T-cell (primary cell): ENCODE measurements at regions of chr6 and their contacts with region 1.

Region 1: DNA sequence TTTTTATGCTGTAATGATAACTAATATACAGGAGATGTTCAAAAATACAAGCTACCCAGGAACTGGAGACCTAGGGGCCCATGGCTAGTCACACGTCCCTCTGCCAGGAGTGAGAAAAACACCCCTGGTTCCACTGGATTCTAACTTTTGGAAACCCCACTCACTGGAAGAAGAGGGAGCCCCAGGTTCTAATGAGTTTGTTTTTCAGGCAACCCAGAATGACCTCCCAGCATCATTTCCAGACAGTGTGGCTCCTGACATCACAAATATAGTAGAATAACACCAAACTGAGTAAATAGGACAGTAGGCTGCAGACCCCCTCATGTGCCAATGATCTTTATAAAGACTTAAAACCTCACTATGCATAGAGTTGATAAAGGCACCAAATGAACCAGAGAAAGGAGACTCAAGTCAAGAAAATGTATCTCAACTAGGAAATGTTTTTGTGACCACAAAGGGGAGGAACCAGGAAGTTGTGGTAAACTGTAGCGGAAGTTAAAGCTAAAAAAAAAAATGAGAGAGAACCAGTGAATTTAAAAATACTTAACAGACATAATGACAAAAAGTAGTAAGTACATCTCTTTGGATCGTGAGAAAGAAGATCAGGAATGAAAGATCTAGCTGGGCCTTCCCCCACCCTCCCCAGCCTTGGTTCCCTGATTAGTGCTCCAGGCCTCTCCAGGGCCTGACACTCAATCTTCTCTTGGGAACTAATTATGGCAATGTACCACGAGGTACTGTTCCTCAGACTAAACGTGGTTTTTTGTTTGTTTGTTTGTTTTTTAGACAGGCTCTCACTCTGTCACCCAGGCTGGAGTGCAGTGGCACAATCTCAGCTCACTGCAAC is 19.8 kb downstream of the HLA-E start:
- DNase-seq: peak in 5 of 35 experiments; percentile 31 to 84 (median 45)
- ATAC-seq: peak; percentile 80 to 87 (median 85)
- H3K4me3 ChIP-seq: peak overlapping the region; percentile 13 to 27
- H3K4me3 Mint-ChIP-seq: peak overlapping the region; percentile 10 to 73 (median 43)
- H3K27ac ChIP-seq: peak overlapping the region; percentile 65
- H3K27ac Mint-ChIP-seq: peak overlapping the region; percentile 80 to 86
- H3K4me1 ChIP-seq: peaks cover 60 to 83% of the 10 kb centered on the region in 2 experiments
- H3K4me1 Mint-ChIP-seq: peaks cover 53 to 68% (median 59%) of the 10 kb centered on the region in 3 donors
- H3K27me3 ChIP-seq: no peaks in the 10 kb centered on the region
- H3K27me3 Mint-ChIP-seq: no peaks in the 10 kb centered on the region

Region 2: GRCh38 chr6:30489081-30490025 is 19.8 kb before region 1 on chr6 and contains the start of gene HLA-E:
- CTCF ChIA-PET with region 1: interaction called, 3 to 12 read pairs
- POLR2A ChIA-PET with region 1: interaction called, 4 to 7 read pairs
- DNase-seq: peak; percentile 69 to 99 (median 90)
- ATAC-seq: peak; percentile 78 to 84 (median 84)
- H3K4me3 ChIP-seq: peak within 1 kb of the TSS; percentile 82 to 93
- H3K4me3 Mint-ChIP-seq: peak within 1 kb of the TSS; percentile 98 to 99 (median 99)
- H3K27ac ChIP-seq: peak within 1 kb of the TSS; percentile 89
- H3K27ac Mint-ChIP-seq: peak within 1 kb of the TSS; percentile 98 to 99
- H3K4me1 ChIP-seq: peaks cover 34 to 54% of the 10 kb centered on the region in 2 experiments
- H3K4me1 Mint-ChIP-seq: peaks cover 40 to 59% (median 56%) of the 10 kb centered on the region in 3 donors
- H3K27me3 ChIP-seq: peaks cover 0 to 3% of the 10 kb centered on the region in 2 experiments
- H3K27me3 Mint-ChIP-seq: no peaks in the 10 kb centered on the region
- total RNA-seq, gene HLA-E: 1,114 to 1,417 (median 1,253) TPM

Region 3: GRCh38 chr6:30600451-30600961 is 91.4 kb after region 1 on chr6:
- CTCF ChIA-PET with region 1: interaction called in 1 of 2 experiments, 3 read pairs
- POLR2A ChIA-PET with region 1: interaction called in 1 of 2 experiments, 18 read pairs
- DNase-seq: no peak
- ATAC-seq: no peak
- H3K4me3 ChIP-seq: no peak overlapping the region
- H3K4me3 Mint-ChIP-seq: no peak overlapping the region
- H3K27ac ChIP-seq: no peak overlapping the region
- H3K27ac Mint-ChIP-seq: peak overlapping the region in 1 of 2 donors; percentile 52
- H3K4me1 ChIP-seq: peaks cover 6 to 26% of the 10 kb centered on the region in 2 experiments
- H3K4me1 Mint-ChIP-seq: peaks cover 21 to 39% (median 22%) of the 10 kb centered on the region in 3 donors
- H3K27me3 ChIP-seq: no peaks in the 10 kb centered on the region
- H3K27me3 Mint-ChIP-seq: no peaks in the 10 kb centered on the region